IMR-90 (cell line): ENCODE measurements at regions of chr14 and their contacts with region 1.

Region 1: GRCh38 chr14:38063711-38064320 is 143.9 kb upstream of the SSTR1 start:
- DNase-seq: no peak
- ATAC-seq: peak; percentile 42
- H3K4me3 ChIP-seq: no peak overlapping the region
- H3K27ac ChIP-seq: no peak overlapping the region
- H3K4me1 ChIP-seq: no peaks in the 10 kb centered on the region
- H3K27me3 ChIP-seq: no peaks in the 10 kb centered on the region
- CTCF ChIP-seq: no peak
- POLR2A ChIP-seq: no peak
- RAD21 ChIP-seq: no peak

Region 2: GRCh38 chr14:38047195-38047902 is 16.5 kb before region 1 on chr14:
- CTCF ChIA-PET with region 1: no interaction called
- POLR2A ChIA-PET with region 1: no interaction called
- dilution Hi-C with region 1: no loop called
- in situ Hi-C with region 1: no loop called
- intact Hi-C with region 1: no loop called
- DNase-seq: no peak
- ATAC-seq: no peak
- H3K4me3 ChIP-seq: no peak overlapping the region
- H3K27ac ChIP-seq: no peak overlapping the region
- H3K4me1 ChIP-seq: no peaks in the 10 kb centered on the region
- H3K27me3 ChIP-seq: no peaks in the 10 kb centered on the region
- CTCF ChIP-seq: no peak
- POLR2A ChIP-seq: no peak
- RAD21 ChIP-seq: no peak

Region 3: GRCh38 chr14:38129705-38130104 is 65.9 kb after region 1 on chr14:
- CTCF ChIA-PET with region 1: no interaction called
- POLR2A ChIA-PET with region 1: no interaction called
- dilution Hi-C with region 1: no loop called
- in situ Hi-C with region 1: no loop called
- intact Hi-C with region 1: loop called (anchors 5 kb)
- DNase-seq: no peak
- ATAC-seq: no peak
- H3K4me3 ChIP-seq: no peak overlapping the region
- H3K27ac ChIP-seq: no peak overlapping the region
- H3K4me1 ChIP-seq: peaks cover 3% of the 10 kb centered on the region
- H3K27me3 ChIP-seq: no peaks in the 10 kb centered on the region
- CTCF ChIP-seq: no peak
- POLR2A ChIP-seq: no peak
- RAD21 ChIP-seq: no peak